Dorsolateral prefrontal cortex (tissue), 120 donors: ENCODE measurements at regions of chr5 and their contacts with region 1.

Region 1: GRCh38 chr5:66814146-66814991 is 218.2 kb downstream of the MAST4 start:
- DNase-seq: peak in 3 of 10 donors; percentile 14 to 44 (median 17)
- H3K4me3 ChIP-seq: no peak overlapping the region
- H3K27ac ChIP-seq: no peak overlapping the region
- H3K27me3 ChIP-seq: no peaks in the 10 kb centered on the region
- CTCF ChIP-seq: peak; percentile 67 to 88 (median 80)

Region 2: GRCh38 chr5:67149951-67150523 is 335.7 kb after region 1 on chr5:
- intact Hi-C with region 1: loop called (anchors 5 to 10 kb)
- DNase-seq: no peak
- H3K4me3 ChIP-seq: peak overlapping the region in 53 of 59 donors; percentile 0 to 58 (median 37)
- H3K27ac ChIP-seq: peak overlapping the region in 11 of 59 donors; percentile 0 to 46 (median 14)
- H3K27me3 ChIP-seq: no peaks in the 10 kb centered on the region
- CTCF ChIP-seq: peak; percentile 20 to 83 (median 67)

Region 3: DNA sequence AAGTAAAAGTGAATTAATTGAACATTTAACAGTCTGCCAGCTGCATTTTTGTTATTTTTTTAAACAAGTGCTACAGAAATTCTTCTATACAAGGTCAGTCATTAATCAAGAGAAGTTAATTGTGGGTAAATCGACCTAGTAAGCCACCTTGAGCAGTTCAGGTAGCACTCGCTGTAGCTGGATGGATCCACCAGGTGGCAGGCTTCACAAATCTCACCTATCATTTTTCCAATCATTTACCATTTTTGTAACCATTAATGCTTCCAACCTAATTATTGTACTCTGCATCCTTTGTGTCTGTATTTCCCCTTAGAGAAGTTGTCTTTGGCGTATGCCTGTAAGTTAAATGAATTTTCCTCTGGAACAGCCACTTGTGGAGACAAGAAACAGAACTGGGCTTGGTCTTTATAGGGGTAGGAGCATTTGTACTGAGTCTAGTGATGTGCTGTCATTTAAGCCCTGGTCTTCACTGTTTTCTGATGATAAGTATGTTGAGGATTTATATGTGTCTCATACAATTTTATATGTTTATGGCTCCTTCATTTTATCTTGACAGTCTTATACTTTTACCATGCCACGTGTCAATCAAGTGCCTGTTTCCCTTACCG is 342.7 kb after region 1 on chr5:
- intact Hi-C with region 1: loop called (anchors 5 to 10 kb)
- DNase-seq: peak in 1 of 10 donors; percentile 27
- H3K4me3 ChIP-seq: no peak overlapping the region
- H3K27ac ChIP-seq: no peak overlapping the region
- H3K27me3 ChIP-seq: no peaks in the 10 kb centered on the region
- CTCF ChIP-seq: peak; percentile 56 to 92 (median 85)

Region 4: DNA sequence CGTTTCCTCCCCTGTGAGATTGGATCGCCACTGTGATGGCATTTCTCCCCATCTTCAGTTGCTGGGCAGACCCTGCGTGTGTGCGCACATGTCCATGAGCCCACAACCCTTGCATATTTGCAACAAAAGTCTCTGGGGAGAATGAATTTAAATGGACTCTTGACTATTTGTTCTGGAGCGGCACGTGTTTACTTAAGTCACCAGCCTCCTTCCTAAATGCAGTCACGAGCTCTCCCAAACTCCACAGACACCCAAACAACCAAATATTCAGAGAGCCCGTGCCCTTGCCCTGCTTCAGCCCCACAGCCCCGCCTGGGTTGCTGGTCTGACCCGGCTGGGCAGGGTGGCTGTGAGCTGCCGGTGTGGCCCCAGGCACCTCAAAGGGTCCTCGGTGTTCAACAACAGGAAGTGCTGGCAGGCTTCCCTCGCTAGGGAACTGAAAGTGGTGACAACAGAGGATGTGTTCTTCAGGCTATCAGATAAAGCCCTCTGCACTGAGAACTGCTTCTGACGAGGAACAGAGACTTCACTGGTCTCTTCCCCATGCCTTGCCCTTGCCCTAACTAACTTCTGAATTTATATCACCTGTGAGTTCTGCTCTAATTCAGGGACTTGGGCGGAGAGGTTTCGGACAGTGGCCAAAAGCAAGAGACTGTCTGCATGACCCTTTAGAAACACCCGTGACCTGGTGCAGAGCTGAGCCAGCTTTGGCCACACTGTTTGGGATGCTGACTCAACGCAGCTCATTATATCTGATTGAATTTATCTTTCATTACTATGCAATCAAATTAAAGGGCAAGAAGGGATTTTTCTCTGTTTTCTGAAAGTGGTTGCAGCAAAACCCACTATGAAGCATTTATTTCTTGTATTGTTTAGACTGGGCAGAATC is 401.5 kb after region 1 on chr5:
- intact Hi-C with region 1: loop called in 1 of 2 experiments (anchors 10 kb)
- DNase-seq: peak in 6 of 10 donors; percentile 44 to 65 (median 60)
- H3K4me3 ChIP-seq: peak overlapping the region in 43 of 59 donors; percentile 3 to 48 (median 34)
- H3K27ac ChIP-seq: peak overlapping the region in 36 of 59 donors; percentile 5 to 81 (median 38)
- H3K27me3 ChIP-seq: no peaks in the 10 kb centered on the region
- CTCF ChIP-seq: peak in 1 of 56 donors; percentile 10

Region 5: DNA sequence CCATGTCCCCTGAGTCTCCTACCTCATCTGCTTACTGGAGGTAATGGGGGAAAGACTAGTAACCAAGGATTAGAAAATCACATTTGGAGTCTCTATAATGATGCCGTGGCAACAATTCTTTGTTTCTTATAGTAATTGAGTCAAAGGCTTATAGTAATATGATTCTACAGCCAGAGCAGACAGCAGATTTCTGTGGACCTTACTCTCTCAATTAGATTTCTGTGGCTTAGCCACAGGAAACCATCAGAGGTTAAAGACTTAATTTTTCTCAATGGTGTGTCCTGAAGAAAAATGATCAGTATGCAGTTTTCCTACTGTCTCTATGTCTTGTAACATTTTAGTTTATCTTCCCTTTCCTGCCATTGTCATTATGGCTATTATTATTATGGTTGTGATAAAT is 441.5 kb after region 1 on chr5:
- intact Hi-C with region 1: no loop called
- DNase-seq: no peak
- H3K4me3 ChIP-seq: no peak overlapping the region
- H3K27ac ChIP-seq: peak overlapping the region in 32 of 59 donors; percentile 1 to 81 (median 47)
- H3K27me3 ChIP-seq: no peaks in the 10 kb centered on the region
- CTCF ChIP-seq: no peak